Activated CD8-positive, alpha-beta T cell treated with anti-CD3 and anti-CD28 coated beads for 36 hours (primary cell): ENCODE measurements at regions of chr12 and their contacts with region 1.

Region 1: DNA sequence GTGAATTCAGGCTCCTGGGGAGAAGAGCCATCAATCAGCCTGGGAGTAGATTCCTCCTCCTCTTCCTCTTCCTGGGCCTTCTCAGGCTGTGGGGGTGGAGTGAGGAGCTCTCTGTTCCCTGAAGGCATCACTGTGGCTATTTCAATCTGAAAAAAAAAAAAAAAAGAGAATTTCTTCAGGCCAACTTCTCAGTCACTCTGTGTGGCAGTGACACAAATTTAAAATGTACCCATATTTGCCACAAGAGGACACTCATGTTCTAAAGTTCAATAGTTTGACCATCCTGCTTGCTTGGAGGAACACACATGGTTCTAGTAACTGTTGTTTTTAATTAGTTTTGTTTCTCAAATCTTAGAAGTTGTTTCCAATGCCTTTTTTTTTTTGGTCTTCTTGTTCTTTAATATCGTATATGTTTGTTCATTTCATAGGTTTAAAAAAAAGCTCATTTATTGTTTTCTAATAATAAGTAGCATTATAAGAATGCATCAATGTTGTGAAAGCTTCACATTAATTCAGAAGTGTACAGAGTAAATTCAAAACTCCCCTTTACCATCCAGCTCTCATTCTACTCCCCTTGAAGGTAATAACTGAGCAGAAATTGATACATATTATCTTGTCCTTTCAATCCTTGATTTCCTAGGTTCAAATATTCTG is 23.3 kb upstream of the CCER1 start:
- DNase-seq: no peak
- ATAC-seq: peak; percentile 60
- H3K4me3 Mint-ChIP-seq: no peak overlapping the region
- H3K27ac Mint-ChIP-seq: no peak overlapping the region
- H3K4me1 Mint-ChIP-seq: no peaks in the 10 kb centered on the region
- H3K27me3 Mint-ChIP-seq: peaks cover 8% of the 10 kb centered on the region
- CTCF ChIP-seq: peak; percentile 31

Region 2: DNA sequence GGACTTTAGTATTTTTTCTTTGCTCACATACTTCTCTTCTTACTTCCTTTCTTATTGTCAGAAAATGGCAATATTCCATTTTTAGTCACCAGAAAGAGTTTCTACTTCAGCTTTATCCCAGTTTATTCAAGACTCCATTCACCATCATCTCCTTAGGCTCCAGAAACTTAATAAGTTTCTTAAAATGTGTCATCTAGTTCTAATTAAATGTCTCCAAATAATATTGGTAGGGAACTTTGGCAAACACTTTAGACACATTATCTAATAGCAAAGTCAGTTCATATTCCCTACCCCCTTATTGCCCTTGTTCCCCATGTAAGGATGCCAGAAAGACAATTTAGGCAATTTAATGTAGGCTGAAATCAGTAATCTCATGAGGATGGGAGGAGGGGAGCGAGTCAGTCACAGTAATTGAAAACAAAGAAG is 11.5 kb after region 1 on chr12:
- CTCF ChIA-PET with region 1: no interaction called
- POLR2A ChIA-PET with region 1: no interaction called
- intact Hi-C with region 1: no loop called
- DNase-seq: no peak
- ATAC-seq: no peak
- H3K4me3 Mint-ChIP-seq: no peak overlapping the region
- H3K27ac Mint-ChIP-seq: no peak overlapping the region
- H3K4me1 Mint-ChIP-seq: no peaks in the 10 kb centered on the region
- H3K27me3 Mint-ChIP-seq: peaks cover 1% of the 10 kb centered on the region
- CTCF ChIP-seq: no peak

Region 3: GRCh38 chr12:90999966-91000365 is 21.7 kb after region 1 on chr12:
- CTCF ChIA-PET with region 1: no interaction called
- POLR2A ChIA-PET with region 1: no interaction called
- intact Hi-C with region 1: no loop called
- DNase-seq: no peak
- ATAC-seq: no peak
- H3K4me3 Mint-ChIP-seq: no peak overlapping the region
- H3K27ac Mint-ChIP-seq: no peak overlapping the region
- H3K4me1 Mint-ChIP-seq: no peaks in the 10 kb centered on the region
- H3K27me3 Mint-ChIP-seq: no peaks in the 10 kb centered on the region
- CTCF ChIP-seq: no peak

Region 4: GRCh38 chr12:91109148-91109564 is 130.9 kb after region 1 on chr12:
- CTCF ChIA-PET with region 1: interaction called, 7 read pairs
- POLR2A ChIA-PET with region 1: no interaction called
- intact Hi-C with region 1: loop called (anchors 5 kb)
- DNase-seq: peak; percentile 76
- ATAC-seq: peak; percentile 49
- H3K4me3 Mint-ChIP-seq: no peak overlapping the region
- H3K27ac Mint-ChIP-seq: no peak overlapping the region
- H3K4me1 Mint-ChIP-seq: no peaks in the 10 kb centered on the region
- H3K27me3 Mint-ChIP-seq: peaks cover 3% of the 10 kb centered on the region
- CTCF ChIP-seq: peak; percentile 59

Region 5: GRCh38 chr12:91326058-91327027 is 348.1 kb after region 1 on chr12:
- CTCF ChIA-PET with region 1: interaction called, 8 read pairs
- POLR2A ChIA-PET with region 1: no interaction called
- intact Hi-C with region 1: loop called (anchors 5 kb)
- DNase-seq: peak; percentile 49
- ATAC-seq: no peak
- H3K4me3 Mint-ChIP-seq: no peak overlapping the region
- H3K27ac Mint-ChIP-seq: no peak overlapping the region
- H3K4me1 Mint-ChIP-seq: no peaks in the 10 kb centered on the region
- H3K27me3 Mint-ChIP-seq: peaks cover 3% of the 10 kb centered on the region
- CTCF ChIP-seq: peak; percentile 82

Region 6: DNA sequence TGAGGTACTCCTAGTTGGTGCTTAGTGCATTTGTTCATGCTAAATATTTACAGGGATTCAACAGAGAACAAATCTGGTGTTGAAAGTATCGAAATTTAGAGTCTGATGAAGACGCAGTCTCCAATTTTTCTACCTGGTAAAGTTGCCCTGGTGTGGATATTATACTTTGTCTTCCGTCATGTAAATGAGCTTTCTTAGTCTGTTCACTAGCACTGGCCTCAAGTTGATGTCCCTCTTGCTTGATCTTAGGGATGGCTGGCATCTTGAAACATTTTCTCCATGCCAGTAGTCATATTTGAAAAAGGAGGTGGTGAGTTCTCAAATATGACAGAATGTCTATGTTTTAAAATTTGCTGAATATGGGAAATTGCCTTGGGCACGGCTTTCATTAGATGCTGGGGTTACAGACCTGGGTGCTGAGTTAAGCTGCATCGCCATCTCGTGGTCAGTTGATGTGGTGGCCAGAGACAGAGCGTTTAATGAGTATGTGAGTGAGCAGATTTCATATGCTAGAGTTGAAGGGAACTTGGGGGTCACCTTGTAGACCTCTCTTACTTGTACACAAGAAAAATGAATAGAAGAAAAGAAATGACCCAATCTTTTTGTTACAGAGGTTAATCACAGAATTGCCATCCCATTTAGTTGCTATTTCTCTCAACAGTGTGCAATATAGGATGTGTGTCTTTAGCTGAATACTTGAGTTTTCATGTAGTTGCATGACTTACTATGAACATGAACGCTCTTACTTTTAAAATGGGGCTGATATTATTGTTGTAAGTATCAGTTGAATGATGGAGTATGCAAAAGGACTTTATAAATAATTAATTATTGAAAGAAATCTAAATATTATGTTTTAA is 377.1 kb after region 1 on chr12:
- CTCF ChIA-PET with region 1: interaction called, 4 read pairs
- POLR2A ChIA-PET with region 1: no interaction called
- intact Hi-C with region 1: loop called (anchors 10 kb)
- DNase-seq: peak; percentile 72
- ATAC-seq: peak; percentile 75
- H3K4me3 Mint-ChIP-seq: no peak overlapping the region
- H3K27ac Mint-ChIP-seq: no peak overlapping the region
- H3K4me1 Mint-ChIP-seq: no peaks in the 10 kb centered on the region
- H3K27me3 Mint-ChIP-seq: peaks cover 20% of the 10 kb centered on the region
- CTCF ChIP-seq: peak; percentile 66